ENCODE measurements at regions of chr5 and their contacts with region 1.

Region 1: DNA sequence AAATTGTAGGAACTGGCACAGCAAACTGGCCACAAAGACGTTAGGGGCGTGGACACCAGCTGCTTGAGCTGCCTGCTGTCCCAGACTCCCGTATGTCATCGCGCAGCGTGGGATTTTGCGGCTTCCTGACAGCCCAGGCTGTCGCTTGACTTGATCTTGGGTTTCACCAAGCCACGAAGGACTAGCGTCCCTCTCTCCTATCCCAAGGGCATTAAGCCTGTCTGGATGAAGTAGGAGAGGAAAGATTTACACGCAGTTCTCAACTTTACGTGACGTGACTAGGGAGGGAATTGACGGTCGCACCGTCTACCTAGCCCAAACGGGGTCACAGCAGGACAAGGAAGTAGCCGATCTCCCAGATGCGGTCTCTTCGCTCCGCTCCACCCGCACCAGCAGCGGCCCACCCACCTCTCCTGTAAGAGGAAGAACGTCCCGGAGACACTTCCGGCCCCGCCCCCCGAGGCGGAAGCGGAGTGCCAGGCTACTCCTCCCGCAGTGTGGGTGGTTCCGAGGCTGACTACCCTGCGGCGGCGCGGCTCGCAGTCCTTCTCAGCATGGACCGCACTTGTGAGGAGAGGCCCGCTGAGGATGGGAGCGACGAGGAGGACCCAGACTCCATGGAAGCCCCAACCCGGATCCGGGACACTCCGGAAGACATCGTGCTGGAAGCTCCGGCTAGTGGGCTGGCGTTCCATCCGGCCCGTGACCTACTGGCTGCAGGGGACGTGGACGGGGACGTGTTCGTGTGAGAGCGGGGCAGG is at the start of gene WDR55:
- DNase-seq: peak; percentile 93
- H3K4me3 ChIP-seq: peak within 1 kb of the TSS; percentile 80 to 87 (median 83)
- H3K27ac ChIP-seq: peak within 1 kb of the TSS; percentile 75
- H3K4me1 ChIP-seq: peaks cover 3% of the 10 kb centered on the region
- H3K27me3 ChIP-seq: no peaks in the 10 kb centered on the region
- CTCF ChIP-seq: no peak
- total RNA-seq, gene WDR55: 18.3 to 26.8 TPM

Region 2: DNA sequence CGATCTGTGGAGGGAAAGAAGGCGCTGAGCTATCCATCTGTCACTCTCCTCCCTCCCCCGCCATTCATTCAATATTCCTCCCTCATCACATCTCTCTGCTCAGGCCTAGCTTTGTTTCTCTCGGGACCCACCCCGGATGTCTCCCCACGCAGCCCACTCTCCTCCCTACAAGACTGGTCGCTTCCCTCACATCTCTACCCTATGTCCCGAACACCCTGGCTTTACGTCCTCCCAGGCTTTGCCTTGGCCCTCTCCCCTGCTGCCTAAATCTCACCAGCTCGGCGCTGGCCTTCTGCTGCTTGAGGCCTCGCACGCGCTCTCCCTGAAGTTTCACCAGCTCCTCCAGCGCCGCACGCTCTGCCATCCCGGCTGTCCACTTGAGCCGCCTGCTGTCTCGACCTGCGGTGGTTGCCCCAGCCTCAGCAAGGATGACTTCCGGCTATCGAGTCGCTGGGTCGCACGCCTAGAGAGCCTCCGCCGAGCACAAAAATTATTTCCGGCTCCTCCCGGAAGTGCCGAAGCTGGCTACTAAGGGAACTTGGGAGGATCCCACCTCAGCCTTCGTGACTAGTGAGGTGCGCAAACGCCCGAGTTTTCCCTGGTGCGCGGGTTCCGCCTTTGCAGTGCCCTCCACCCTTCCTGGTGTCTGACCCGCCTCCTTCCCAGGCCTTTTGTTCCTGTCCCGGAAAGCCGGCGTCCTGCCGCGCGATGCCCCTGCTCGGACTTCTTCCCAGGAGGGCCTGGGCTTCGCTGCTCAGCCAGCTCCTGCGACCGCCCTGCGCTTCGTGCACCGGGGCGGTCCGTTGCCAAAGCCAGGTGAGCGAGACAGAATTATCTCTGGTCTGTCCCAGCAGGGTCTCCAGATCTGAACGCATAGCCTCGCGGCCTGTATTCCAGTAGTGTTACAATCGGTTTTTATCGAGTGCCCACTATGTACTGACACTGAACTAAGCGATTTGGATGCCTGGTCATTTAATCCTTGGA is 26.7 kb after region 1 on chr5 and contains the starts of genes HARS1 and HARS2:
- CTCF ChIA-PET with region 1: no interaction called
- dilution Hi-C with region 1: no loop called
- in situ Hi-C with region 1: no loop called
- intact Hi-C with region 1: loop called (anchors 1 kb)
- DNase-seq: peak; percentile 98
- H3K4me3 ChIP-seq: peak within 1 kb of the TSS; percentile 93 to 98 (median 95)
- H3K27ac ChIP-seq: peak within 1 kb of the TSS; percentile 66
- H3K4me1 ChIP-seq: peaks cover 4% of the 10 kb centered on the region
- H3K27me3 ChIP-seq: no peaks in the 10 kb centered on the region
- CTCF ChIP-seq: no peak
- total RNA-seq, gene HARS1: 60.3 to 104 TPM
- total RNA-seq, gene HARS2: 24.8 to 30.4 TPM

Region 3: GRCh38 chr5:140710899-140711552 is 46.5 kb after region 1 on chr5:
- CTCF ChIA-PET with region 1: no interaction called
- dilution Hi-C with region 1: no loop called
- in situ Hi-C with region 1: no loop called
- intact Hi-C with region 1: loop called (anchors 2 kb)
- DNase-seq: peak; percentile 97
- H3K4me3 ChIP-seq: peak overlapping the region; percentile 48 to 55 (median 50)
- H3K27ac ChIP-seq: peak overlapping the region; percentile 67
- H3K4me1 ChIP-seq: no peaks in the 10 kb centered on the region
- H3K27me3 ChIP-seq: no peaks in the 10 kb centered on the region
- CTCF ChIP-seq: no peak

Region 4: GRCh38 chr5:140785905-140786686 is 121.6 kb after region 1 on chr5 and contains the start of gene PCDHA1:
- CTCF ChIA-PET with region 1: no interaction called
- dilution Hi-C with region 1: no loop called
- in situ Hi-C with region 1: no loop called
- intact Hi-C with region 1: no loop called
- DNase-seq: no peak
- H3K4me3 ChIP-seq: no peak within 1 kb of the TSS
- H3K27ac ChIP-seq: no peak within 1 kb of the TSS
- H3K4me1 ChIP-seq: no peaks in the 10 kb centered on the region
- H3K27me3 ChIP-seq: no peaks in the 10 kb centered on the region
- CTCF ChIP-seq: peak in 1 of 2 donors; percentile 1
- total RNA-seq, gene PCDHA1: 0.26 TPM in 1 of 2 donors, not detected in the other

Region 5: GRCh38 chr5:140986117-140986521 is 321.6 kb after region 1 on chr5:
- CTCF ChIA-PET with region 1: no interaction called
- dilution Hi-C with region 1: no loop called
- in situ Hi-C with region 1: no loop called
- intact Hi-C with region 1: no loop called
- DNase-seq: no peak
- H3K4me3 ChIP-seq: no peak overlapping the region
- H3K27ac ChIP-seq: no peak overlapping the region
- H3K4me1 ChIP-seq: no peaks in the 10 kb centered on the region
- H3K27me3 ChIP-seq: no peaks in the 10 kb centered on the region
- CTCF ChIP-seq: no peak